Right ventricle myocardium inferior (tissue), 1 donor: ENCODE measurements at regions of chr16 and their contacts with region 1.

Region 1: GRCh38 chr16:81610144-81610842 is 165.7 kb downstream of the CMIP start:
- DNase-seq: peak; percentile 90
- ATAC-seq: peak; percentile 77

Region 2: GRCh38 chr16:81403616-81404373 is 206.5 kb before region 1 on chr16:
- intact Hi-C with region 1: loop called (anchors 5 kb)
- DNase-seq: peak; percentile 95
- ATAC-seq: peak; percentile 86

Region 3: DNA sequence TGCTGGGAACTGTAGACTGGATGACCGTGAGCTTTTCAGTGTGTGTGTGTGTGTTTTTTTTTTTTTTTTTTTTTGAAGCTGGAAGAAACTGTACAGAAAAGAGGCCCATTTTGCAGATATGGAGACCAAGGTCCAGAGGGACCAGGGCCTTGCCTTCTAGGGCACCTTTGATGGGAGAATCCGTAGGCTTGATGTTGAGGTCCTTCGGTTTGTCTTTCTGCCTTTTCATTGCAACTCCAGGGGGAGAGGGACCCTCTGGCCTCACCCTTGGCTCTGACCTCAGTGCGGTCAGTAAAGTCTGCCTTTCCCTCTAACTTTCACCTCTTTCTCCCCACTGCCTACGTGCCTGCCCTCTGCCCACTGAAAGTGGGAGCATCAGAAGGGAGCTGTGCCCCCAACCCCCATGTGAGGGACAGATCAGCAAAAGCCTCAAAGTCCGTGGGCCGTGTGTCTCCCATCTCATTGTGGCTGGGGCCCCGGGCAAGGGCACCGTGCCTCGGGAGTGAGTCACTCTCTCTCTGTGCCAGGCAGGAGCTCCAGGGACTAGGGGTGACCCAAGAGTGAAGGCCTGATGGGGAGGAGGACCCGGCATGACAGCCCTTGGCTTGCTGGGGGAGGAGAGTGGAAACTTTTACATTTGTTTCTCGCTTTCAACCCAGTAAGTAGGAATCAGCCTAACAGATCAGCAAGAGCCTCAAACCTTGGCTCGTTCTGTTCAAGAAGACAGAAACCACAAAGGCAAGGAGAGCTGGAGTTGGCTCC is 42.1 kb before region 1 on chr16:
- intact Hi-C with region 1: loop called (anchors 5 kb)
- DNase-seq: no peak
- ATAC-seq: peak; percentile 47